T-cell (primary cell): ENCODE measurements at regions of chr1 and their contacts with region 1.

Region 1: GRCh38 chr1:109266960-109267735 is 15.8 kb downstream of the PSRC1 start:
- DNase-seq: no peak
- ATAC-seq: no peak
- H3K4me3 ChIP-seq: no peak overlapping the region
- H3K4me3 Mint-ChIP-seq: no peak overlapping the region
- H3K27ac ChIP-seq: no peak overlapping the region
- H3K27ac Mint-ChIP-seq: no peak overlapping the region
- H3K4me1 ChIP-seq: peaks cover 0 to 7% of the 10 kb centered on the region in 2 experiments
- H3K4me1 Mint-ChIP-seq: peaks cover 2 to 6% (median 3%) of the 10 kb centered on the region in 3 donors
- H3K27me3 ChIP-seq: peaks cover 0 to 5% of the 10 kb centered on the region in 2 experiments
- H3K27me3 Mint-ChIP-seq: no peaks in the 10 kb centered on the region

Region 2: GRCh38 chr1:109229531-109230127 is 37.5 kb before region 1 on chr1:
- CTCF ChIA-PET with region 1: interaction called in 1 of 2 experiments, 10 read pairs
- POLR2A ChIA-PET with region 1: no interaction called
- DNase-seq: no peak
- ATAC-seq: no peak
- H3K4me3 ChIP-seq: no peak overlapping the region
- H3K4me3 Mint-ChIP-seq: no peak overlapping the region
- H3K27ac ChIP-seq: no peak overlapping the region
- H3K27ac Mint-ChIP-seq: peak overlapping the region in 1 of 2 donors; percentile 44
- H3K4me1 ChIP-seq: no peaks in the 10 kb centered on the region
- H3K4me1 Mint-ChIP-seq: peaks cover 14 to 18% (median 15%) of the 10 kb centered on the region in 3 donors
- H3K27me3 ChIP-seq: no peaks in the 10 kb centered on the region
- H3K27me3 Mint-ChIP-seq: no peaks in the 10 kb centered on the region